ENCODE measurements at regions of chr22 and their contacts with region 1.

Region 1: GRCh38 chr22:37260901-37261336 is 16.9 kb upstream of the RAC2 start:
- DNase-seq: no peak
- H3K4me3 ChIP-seq: no peak overlapping the region
- H3K27me3 ChIP-seq: peaks cover 14% of the 10 kb centered on the region
- CTCF ChIP-seq: peak; percentile 96

Region 2: DNA sequence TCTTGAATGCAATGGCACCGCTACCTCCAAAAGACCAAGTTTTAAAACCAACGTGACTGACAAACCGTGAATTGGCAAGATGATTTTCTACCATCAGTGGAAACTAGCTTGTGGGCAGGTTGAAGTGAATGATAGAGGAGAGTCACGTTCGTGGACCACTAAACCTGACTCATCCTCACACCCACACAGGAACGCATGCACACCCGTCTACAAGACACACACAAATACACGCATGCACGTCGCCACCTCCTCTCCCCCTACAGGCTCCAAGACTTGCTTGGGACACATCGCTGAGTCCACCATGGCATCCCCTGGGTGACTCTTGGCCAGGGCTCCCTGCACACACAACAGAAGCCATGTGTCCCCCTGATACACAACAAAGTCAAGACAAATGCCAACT is 165.8 kb before region 1 on chr22:
- CTCF ChIA-PET with region 1: no interaction called
- POLR2A ChIA-PET with region 1: no interaction called
- DNase-seq: no peak
- H3K4me3 ChIP-seq: no peak overlapping the region
- H3K27me3 ChIP-seq: peaks cover 17% of the 10 kb centered on the region
- CTCF ChIP-seq: no peak

Region 3: GRCh38 chr22:37199103-37199759 is 61.7 kb before region 1 on chr22:
- CTCF ChIA-PET with region 1: interaction called, 17 read pairs
- POLR2A ChIA-PET with region 1: no interaction called
- DNase-seq: peak; percentile 84
- H3K4me3 ChIP-seq: peak overlapping the region; percentile 66
- H3K27me3 ChIP-seq: no peaks in the 10 kb centered on the region
- CTCF ChIP-seq: peak; percentile 97

Region 4: GRCh38 chr22:37244114-37244921 is 16.6 kb before region 1 on chr22 and contains the start of gene RAC2:
- CTCF ChIA-PET with region 1: interaction called, 83 read pairs
- POLR2A ChIA-PET with region 1: no interaction called
- DNase-seq: no peak
- H3K4me3 ChIP-seq: peak within 1 kb of the TSS; percentile 39
- H3K27me3 ChIP-seq: no peaks in the 10 kb centered on the region; the same call in 1 of the 2 replicates
- CTCF ChIP-seq: no peak
- polyA plus RNA-seq, gene RAC2: 13.7 and 25.7 TPM in 2 replicates

Region 5: DNA sequence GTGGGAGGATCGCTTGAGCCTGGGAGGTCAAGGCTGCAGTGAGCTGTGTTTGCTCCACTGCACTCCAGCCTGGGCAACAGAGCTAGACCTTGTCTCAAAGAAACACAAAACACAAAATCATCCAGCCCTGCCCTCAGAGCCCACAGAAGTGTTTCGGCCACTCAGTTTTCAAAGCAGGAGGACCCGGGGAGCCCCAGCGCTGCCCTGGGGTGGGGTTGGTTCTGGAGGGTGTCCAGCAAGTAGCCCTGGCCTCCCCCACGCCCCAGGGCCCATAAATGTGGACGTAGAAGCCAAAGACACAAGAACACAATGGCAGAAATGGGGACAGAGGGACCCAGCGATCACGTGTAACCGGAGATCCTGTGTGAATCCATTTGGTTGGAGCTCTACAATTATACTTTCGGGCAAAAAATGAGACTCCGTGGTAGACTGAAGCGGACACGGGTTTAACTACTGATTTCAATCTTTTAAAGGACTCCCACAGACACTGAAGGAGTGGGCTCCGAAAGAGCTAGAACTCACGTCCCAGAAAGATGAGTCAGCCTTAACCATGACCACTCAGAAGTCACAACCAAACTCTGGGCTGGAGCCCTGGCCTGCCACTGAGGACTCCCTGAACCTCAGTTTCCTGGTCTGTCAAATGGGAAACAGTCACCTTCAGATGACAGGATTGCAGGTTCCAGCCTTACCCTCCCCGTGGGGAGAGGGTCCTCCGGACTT is 12.4 kb after region 1 on chr22:
- CTCF ChIA-PET with region 1: interaction called, 50 read pairs
- POLR2A ChIA-PET with region 1: no interaction called
- DNase-seq: peak; percentile 52
- H3K4me3 ChIP-seq: no peak overlapping the region
- H3K27me3 ChIP-seq: no peaks in the 10 kb centered on the region
- CTCF ChIP-seq: no peak

Region 6: DNA sequence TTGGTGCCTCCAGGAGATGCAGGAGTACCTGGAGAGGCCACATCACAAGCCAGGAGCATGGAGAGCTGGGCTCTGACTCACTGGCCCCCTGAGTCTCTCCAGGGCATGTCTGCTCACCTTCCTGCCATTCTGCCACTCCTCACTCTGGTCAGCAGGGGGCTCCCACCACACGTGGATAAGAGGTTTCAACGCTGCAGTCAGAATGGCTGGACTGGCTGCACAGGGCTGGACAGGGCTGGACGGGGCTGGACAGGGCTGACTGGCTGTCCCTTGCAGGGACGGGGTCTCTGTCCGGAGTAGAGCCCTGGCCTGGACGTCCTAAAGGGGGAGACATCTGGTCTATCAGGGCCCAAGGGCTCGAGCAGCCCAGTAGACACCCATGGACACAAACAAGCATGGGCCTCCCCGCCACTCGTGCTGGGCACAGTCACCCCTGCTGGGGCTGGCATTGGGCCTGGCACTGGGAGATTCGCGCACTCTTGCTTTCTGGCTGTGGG is 56.0 kb after region 1 on chr22:
- CTCF ChIA-PET with region 1: interaction called, 18 read pairs
- POLR2A ChIA-PET with region 1: no interaction called
- DNase-seq: no peak
- H3K4me3 ChIP-seq: no peak overlapping the region
- H3K27me3 ChIP-seq: no peaks in the 10 kb centered on the region
- CTCF ChIP-seq: peak; percentile 93

Region 7: DNA sequence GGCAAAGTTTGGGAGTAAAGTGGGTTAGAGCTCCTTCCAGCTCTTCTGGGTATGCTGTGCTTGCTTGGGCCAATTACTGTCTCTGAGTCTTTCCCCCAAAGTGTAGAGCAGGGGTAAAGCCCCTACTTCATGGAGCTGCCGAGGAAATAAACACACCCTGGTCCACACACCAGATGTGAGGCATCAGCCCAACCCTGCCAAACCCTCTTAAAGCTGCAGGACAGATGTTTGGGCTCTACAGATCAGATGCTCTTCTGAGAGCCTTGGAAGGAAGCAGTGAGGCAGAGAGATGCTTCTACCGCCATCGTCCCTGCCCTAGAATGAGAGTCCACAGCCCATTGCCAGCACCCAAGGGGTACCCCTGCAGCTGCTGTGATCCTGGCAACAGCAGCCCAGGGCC is 101.7 kb after region 1 on chr22:
- CTCF ChIA-PET with region 1: no interaction called
- POLR2A ChIA-PET with region 1: no interaction called
- DNase-seq: no peak
- H3K4me3 ChIP-seq: no peak overlapping the region
- H3K27me3 ChIP-seq: peaks cover 2% of the 10 kb centered on the region; the same call in 1 of the 2 replicates
- CTCF ChIP-seq: no peak

Region 8: DNA sequence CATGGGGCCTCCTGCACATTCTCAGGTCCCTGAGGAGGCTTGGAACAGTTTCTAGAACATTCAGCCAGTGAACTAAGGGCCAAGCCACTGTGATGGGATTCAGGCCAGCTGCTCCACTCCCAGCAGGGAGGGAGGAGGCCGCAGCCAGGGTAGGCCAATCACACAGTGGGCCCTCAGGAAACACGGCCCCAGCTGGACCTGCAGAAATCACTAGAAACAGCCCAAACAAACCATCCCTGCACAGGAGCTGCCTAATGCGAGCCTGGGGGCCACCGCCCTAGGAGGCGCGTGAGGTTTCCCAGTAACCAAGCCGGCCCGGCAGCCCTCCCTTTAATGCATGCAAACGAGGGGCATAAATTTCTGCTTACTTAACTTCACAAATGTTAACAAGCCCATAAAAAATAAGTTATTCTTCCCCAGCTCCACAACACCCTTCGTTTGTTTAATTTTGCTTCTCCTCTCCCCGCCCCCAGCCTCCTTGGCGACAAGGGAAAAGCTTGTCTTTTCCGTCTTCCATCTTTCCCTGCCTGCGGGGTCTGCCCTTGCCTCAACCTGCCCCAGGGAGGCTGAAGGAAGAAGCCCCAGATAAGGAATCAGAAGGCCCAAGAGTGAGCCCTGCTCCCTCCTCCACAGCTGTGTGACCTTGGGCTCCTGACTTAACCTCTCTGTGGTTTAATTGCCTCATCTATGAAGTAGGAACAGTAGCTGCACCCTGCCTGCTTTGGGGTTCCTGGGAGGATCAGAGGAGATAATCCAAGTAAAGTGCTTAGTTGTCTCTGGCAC is 140.7 kb after region 1 on chr22:
- CTCF ChIA-PET with region 1: no interaction called
- POLR2A ChIA-PET with region 1: no interaction called
- DNase-seq: no peak
- H3K4me3 ChIP-seq: no peak overlapping the region
- H3K27me3 ChIP-seq: no peaks in the 10 kb centered on the region; the same call in 1 of the 2 replicates
- CTCF ChIP-seq: no peak

Region 9: DNA sequence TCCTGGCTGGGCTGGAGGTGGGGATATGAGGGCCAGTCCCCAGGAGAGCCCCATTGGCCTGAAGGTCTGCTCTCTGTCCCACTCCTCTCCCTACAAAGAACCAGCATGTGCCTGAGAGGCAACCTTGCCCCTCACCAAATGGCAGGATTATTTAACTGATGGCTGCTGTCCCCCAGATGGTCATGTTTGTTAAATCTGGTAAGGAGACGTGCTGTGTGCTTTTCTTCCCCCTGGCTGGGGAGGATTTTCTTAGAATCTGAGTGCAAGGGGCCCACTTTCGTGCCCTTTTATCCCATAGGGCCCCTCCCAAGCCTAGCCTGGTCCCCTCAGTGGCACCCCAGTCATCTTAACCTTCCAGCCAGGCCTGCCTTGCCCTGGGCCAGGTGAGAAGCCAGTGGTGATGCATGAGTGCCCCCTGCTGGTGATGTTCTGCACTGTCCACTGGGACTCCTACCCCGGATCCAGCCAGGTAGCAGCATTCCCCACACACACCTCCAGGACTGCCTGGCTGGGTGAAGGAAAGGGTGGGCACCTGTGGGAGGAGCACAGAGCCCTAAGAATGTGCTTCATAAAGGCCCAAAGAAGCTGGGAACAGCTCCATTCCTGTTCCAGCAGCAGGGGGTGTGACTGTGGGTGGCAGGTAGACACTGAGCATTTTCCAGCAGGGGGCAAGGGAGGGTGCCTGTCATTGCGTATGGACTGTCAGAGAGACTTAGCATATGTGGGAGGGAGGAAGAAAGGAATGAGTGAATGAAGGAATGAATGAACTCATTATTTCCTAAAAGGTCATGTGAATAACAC is 196.4 kb after region 1 on chr22:
- CTCF ChIA-PET with region 1: interaction called, 20 read pairs
- POLR2A ChIA-PET with region 1: no interaction called
- DNase-seq: no peak
- H3K4me3 ChIP-seq: no peak overlapping the region
- H3K27me3 ChIP-seq: no peaks in the 10 kb centered on the region; the same call in 1 of the 2 replicates
- CTCF ChIP-seq: peak; percentile 94

Measured in BJ (cell line).